ENCODE measurements at regions of chr17 and their contacts with region 1.

Region 1: GRCh38 chr17:42101513-42102319 is 3.4 kb upstream of the ZNF385C start:
- DNase-seq: peak; percentile 83
- H3K4me3 Mint-ChIP-seq: no peak overlapping the region
- H3K27ac Mint-ChIP-seq: no peak overlapping the region
- H3K4me1 Mint-ChIP-seq: peaks cover 10% of the 10 kb centered on the region
- H3K27me3 Mint-ChIP-seq: peaks cover 12% of the 10 kb centered on the region

Region 2: GRCh38 chr17:42025191-42025579 is 76.5 kb before region 1 on chr17:
- CTCF ChIA-PET with region 1: interaction called, 10 read pairs
- intact Hi-C with region 1: loop called (anchors 1 kb)
- DNase-seq: no peak
- H3K4me3 Mint-ChIP-seq: no peak overlapping the region
- H3K27ac Mint-ChIP-seq: peak overlapping the region; percentile 66
- H3K4me1 Mint-ChIP-seq: peaks cover 29% of the 10 kb centered on the region
- H3K27me3 Mint-ChIP-seq: no peaks in the 10 kb centered on the region

Region 3: GRCh38 chr17:42067351-42068091 is 34.2 kb before region 1 on chr17:
- CTCF ChIA-PET with region 1: interaction called, 34 read pairs
- intact Hi-C with region 1: loop called (anchors 1 kb)
- DNase-seq: peak; percentile 83
- H3K4me3 Mint-ChIP-seq: no peak overlapping the region
- H3K27ac Mint-ChIP-seq: no peak overlapping the region
- H3K4me1 Mint-ChIP-seq: peaks cover 22% of the 10 kb centered on the region
- H3K27me3 Mint-ChIP-seq: peaks cover 15% of the 10 kb centered on the region

Region 4: GRCh38 chr17:42090964-42091790 is 10.5 kb before region 1 on chr17:
- CTCF ChIA-PET with region 1: interaction called, 11 read pairs
- intact Hi-C with region 1: no loop called
- DNase-seq: no peak
- H3K4me3 Mint-ChIP-seq: no peak overlapping the region
- H3K27ac Mint-ChIP-seq: no peak overlapping the region
- H3K4me1 Mint-ChIP-seq: no peaks in the 10 kb centered on the region
- H3K27me3 Mint-ChIP-seq: peaks cover 3% of the 10 kb centered on the region

Region 5: GRCh38 chr17:42132941-42133340 is 31.2 kb after region 1 on chr17:
- CTCF ChIA-PET with region 1: no interaction called
- intact Hi-C with region 1: no loop called
- DNase-seq: peak; percentile 55
- H3K4me3 Mint-ChIP-seq: no peak overlapping the region
- H3K27ac Mint-ChIP-seq: peak overlapping the region; percentile 60
- H3K4me1 Mint-ChIP-seq: peaks cover 56% of the 10 kb centered on the region
- H3K27me3 Mint-ChIP-seq: no peaks in the 10 kb centered on the region